Panc1 (cell line): ENCODE measurements at regions of chr17 and their contacts with region 1.

Region 1: GRCh38 chr17:49887086-49888028 is 39.5 kb upstream of the TAC4 start:
- DNase-seq: no peak
- ATAC-seq: no peak
- H3K4me3 ChIP-seq: no peak overlapping the region
- H3K27ac ChIP-seq: no peak overlapping the region
- H3K4me1 ChIP-seq: no peaks in the 10 kb centered on the region
- H3K27me3 ChIP-seq: no peaks in the 10 kb centered on the region
- CTCF ChIP-seq: no peak

Region 2: DNA sequence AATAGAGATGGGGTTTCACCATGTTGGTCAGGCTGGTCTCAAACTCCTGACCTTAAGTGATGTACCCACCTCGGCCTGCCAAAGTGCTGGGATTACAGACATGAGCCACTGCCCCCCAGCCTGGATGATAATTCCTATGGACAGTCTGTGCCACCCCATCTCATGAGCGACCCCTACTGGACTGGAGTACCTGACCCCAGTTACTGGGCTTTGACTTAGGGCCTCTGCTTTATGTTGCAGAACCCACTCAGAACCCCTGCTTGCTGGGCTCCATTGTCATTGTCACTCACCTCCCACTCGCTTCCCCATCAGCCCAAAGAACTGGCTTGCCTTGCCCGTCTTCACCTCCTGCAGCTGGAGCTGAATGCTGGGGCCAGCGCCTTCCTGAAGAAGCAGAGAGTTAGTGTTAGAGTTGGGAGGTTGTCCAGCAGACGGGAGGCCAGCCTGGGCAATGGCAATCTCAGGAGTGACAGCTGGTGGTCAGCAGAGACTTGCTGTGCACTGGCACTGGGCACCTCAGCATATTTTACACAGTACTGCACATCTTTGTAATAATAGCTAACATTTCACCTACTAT is 43.5 kb before region 1 on chr17:
- CTCF ChIA-PET with region 1: no interaction called
- POLR2A ChIA-PET with region 1: no interaction called
- in situ Hi-C with region 1: no loop called
- intact Hi-C with region 1: no loop called
- DNase-seq: no peak
- ATAC-seq: peak; percentile 63; the same call in 1 of the 2 replicates
- H3K4me3 ChIP-seq: no peak overlapping the region
- H3K27ac ChIP-seq: no peak overlapping the region
- H3K4me1 ChIP-seq: no peaks in the 10 kb centered on the region
- H3K27me3 ChIP-seq: no peaks in the 10 kb centered on the region
- CTCF ChIP-seq: peak; percentile 84

Region 3: DNA sequence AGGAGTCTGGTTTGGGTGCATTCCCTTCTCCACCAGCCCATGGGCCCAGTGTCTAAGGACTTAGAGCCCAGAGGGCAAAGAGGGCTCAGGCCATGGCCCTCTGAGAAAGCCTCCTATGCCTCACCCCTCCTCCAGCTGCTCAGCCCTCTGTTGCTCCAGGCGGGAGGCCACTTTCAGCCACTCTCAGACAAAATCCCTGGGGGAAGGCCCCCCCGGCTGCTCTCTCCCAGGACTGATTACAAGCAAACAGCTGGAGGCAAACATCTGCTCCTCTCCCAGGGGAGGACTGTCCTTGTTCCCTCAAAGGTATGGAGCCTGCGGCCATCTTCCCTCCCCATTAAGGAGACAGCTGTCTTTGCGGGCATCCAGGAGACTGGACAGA is 26.7 kb after region 1 on chr17:
- CTCF ChIA-PET with region 1: no interaction called
- POLR2A ChIA-PET with region 1: no interaction called
- in situ Hi-C with region 1: no loop called
- intact Hi-C with region 1: no loop called
- DNase-seq: no peak
- ATAC-seq: no peak
- H3K4me3 ChIP-seq: no peak overlapping the region
- H3K27ac ChIP-seq: no peak overlapping the region
- H3K4me1 ChIP-seq: peaks cover 24% of the 10 kb centered on the region
- H3K27me3 ChIP-seq: 0 out of 2 replicates have a peak, but pooled peaks cover 2% of the 10 kb centered on the region
- CTCF ChIP-seq: no peak

Region 4: GRCh38 chr17:49987681-49988441 is 100.5 kb after region 1 on chr17:
- CTCF ChIA-PET with region 1: no interaction called
- POLR2A ChIA-PET with region 1: interaction called, 12 read pairs
- in situ Hi-C with region 1: no loop called
- intact Hi-C with region 1: no loop called
- DNase-seq: no peak
- ATAC-seq: peak; percentile 81
- H3K4me3 ChIP-seq: no peak overlapping the region
- H3K27ac ChIP-seq: peak overlapping the region; percentile 57
- H3K4me1 ChIP-seq: peaks cover 34% of the 10 kb centered on the region
- H3K27me3 ChIP-seq: no peaks in the 10 kb centered on the region
- CTCF ChIP-seq: no peak